Breast epithelium (tissue), 4 donors: ENCODE measurements at regions of chr12 and their contacts with region 1.

Region 1: GRCh38 chr12:84741692-84742091 is 170.9 kb downstream of the SLC6A15 start:
- DNase-seq: no peak
- H3K4me3 ChIP-seq: no peak overlapping the region
- H3K27ac ChIP-seq: no peak overlapping the region
- H3K4me1 ChIP-seq: no peaks in the 10 kb centered on the region
- H3K27me3 ChIP-seq: no peaks in the 10 kb centered on the region
- CTCF ChIP-seq: no peak
- POLR2A ChIP-seq: no peak

Region 2: DNA sequence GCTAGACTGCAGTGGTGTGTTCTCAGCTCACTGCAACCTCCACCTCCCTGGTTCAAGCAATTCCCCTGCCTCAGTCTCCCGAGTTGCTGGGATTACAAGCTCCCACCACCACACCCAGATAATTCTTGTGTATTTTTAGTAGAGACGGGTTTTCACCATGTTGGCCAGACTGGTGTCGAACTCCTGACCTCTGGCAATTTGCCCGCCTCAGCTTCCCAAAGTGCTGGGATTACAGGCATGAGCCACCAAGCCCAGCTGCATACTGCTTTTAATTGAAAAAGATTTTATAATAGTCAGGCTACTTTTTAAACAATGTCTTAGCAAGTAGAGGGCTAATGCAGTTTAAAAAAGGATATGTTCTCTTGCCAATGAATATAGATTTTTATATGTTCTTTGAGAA is 498.0 kb before region 1 on chr12:
- intact Hi-C with region 1: loop called (anchors 10 kb)
- DNase-seq: no peak
- H3K4me3 ChIP-seq: no peak overlapping the region
- H3K27ac ChIP-seq: no peak overlapping the region
- H3K4me1 ChIP-seq: no peaks in the 10 kb centered on the region
- H3K27me3 ChIP-seq: no peaks in the 10 kb centered on the region
- CTCF ChIP-seq: no peak
- POLR2A ChIP-seq: no peak

Region 3: DNA sequence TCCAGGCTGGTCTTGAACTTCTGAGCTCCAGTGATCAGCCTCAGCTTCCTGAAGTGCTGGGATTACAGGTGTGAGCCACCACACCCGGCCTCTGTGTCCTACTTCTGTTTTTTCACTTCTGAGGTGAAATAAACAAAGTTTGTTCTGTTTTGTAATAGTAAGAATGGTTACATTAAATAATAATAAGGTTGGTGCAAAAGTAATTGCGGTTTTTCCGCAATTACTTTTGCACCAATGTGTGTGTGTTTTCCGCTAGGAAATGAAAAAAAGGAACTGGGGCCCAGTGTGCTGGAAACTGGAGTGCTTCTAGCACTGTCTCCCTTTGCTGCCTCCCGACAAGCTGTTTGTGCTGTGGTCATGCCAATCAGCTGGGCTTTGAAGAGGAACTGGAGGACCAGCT is 1273.3 kb after region 1 on chr12:
- intact Hi-C with region 1: no loop called
- DNase-seq: no peak
- H3K4me3 ChIP-seq: no peak overlapping the region
- H3K27ac ChIP-seq: no peak overlapping the region
- H3K4me1 ChIP-seq: no peaks in the 10 kb centered on the region
- H3K27me3 ChIP-seq: no peaks in the 10 kb centered on the region
- CTCF ChIP-seq: no peak
- POLR2A ChIP-seq: no peak